Adrenal gland (tissue), 19 donors: ENCODE measurements at regions of chr5 and their contacts with region 1.

Region 1: DNA sequence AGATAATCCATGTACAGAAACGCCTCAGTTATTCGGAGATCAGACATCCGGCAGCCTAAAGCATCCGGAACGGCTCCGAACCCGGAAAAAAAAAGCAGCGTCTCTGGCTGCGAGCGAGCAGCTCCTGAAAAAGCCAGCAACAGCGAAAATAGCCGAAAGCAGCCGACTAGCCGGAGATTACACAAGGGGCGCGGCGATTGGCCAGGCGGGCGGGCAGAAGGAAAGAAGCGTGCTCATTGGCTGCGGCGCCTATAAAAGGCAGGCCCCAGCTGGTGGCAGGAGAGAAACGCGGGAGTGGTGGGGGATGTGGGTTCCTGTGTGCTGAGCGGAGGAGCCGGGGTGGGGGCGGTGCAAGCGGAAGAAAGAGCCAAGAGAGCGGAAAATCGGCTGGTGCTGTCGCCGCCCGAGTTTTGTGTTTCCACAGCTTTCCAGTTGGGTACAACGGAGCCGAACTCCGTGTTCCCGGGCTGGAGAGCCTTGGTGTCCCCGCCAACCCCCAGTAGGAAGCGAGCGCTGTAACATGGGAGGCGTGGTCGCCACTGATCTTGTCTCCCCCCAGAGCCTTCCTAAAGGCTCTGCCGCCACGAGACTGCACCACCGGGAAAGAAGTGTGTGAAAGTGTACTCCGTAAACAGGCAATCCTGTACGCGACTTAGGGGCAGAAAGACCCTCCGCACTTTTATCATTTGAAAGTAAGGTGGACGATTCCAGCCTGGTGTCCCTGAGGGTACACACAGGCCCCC is at the start of gene ARL15:
- DNase-seq: peak; percentile 98 to 100 (median 99)
- H3K4me3 ChIP-seq: peak within 1 kb of the TSS; percentile 43 to 97 (median 86)
- H3K27ac ChIP-seq: peak within 1 kb of the TSS in 4 of 5 donors; percentile 81 to 90 (median 86)
- H3K4me1 ChIP-seq: peaks cover 12 to 21% of the 10 kb centered on the region in 2 donors
- H3K27me3 ChIP-seq: no peaks in the 10 kb centered on the region
- CTCF ChIP-seq: no peak
- POLR2A ChIP-seq: peak; percentile 99 to 100
- total RNA-seq, gene ARL15: 19.4 to 85.6 (median 42.8) TPM

Region 2: DNA sequence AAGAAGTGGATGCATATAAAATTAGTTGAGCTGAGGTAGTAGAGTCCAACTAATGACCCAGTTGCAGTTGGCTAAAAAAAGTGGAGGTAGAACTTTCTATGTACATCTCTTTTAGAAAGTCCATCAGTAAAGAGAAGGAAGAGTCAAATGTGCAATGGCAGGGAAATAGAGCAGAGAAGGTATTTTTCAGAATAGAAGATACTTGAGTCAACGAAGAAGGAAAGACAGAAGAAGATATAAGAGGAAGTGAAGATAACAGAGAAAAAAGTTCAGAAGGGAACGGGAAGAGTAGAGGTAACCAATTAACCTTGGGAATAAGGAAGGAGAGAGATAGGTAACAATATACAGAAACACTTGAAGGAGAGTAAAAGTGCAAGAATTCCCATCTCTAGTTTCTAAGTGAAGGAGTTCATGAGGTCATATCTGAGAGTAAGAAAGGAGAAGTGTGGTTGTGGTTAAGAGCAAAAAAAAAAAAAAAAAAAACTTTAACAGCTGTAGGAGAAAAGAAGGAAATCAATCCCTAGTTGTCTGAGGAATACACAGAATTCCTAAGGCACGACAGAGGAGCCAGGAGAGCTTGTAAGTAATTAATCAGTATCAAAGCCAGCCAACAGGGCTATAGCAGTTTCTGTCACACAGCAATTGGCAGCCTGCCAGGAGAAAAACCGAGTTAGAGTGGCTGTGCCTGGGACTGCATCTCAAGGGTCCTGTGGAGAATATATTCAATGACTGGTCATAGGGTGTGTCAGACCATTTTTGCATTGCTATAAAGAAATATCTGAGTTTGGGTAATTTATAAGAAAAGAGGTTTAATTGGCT is 61.2 kb before region 1 on chr5:
- intact Hi-C with region 1: loop called (anchors 10 kb)
- DNase-seq: peak; percentile 24 to 65 (median 31)
- H3K4me3 ChIP-seq: no peak overlapping the region
- H3K27ac ChIP-seq: no peak overlapping the region
- H3K4me1 ChIP-seq: no peaks in the 10 kb centered on the region
- H3K27me3 ChIP-seq: no peaks in the 10 kb centered on the region
- CTCF ChIP-seq: no peak
- POLR2A ChIP-seq: no peak